CD4-positive, alpha-beta T cell (primary cell): ENCODE measurements at regions of chr15 and their contacts with region 1.

Region 1: GRCh38 chr15:40893733-40894688 is at the start of gene VPS18:
- DNase-seq: peak; percentile 97 to 100 (median 99)
- ATAC-seq: peak; percentile 96
- H3K4me3 ChIP-seq: peak within 1 kb of the TSS; percentile 79
- H3K4me3 Mint-ChIP-seq: peak within 1 kb of the TSS; percentile 100
- H3K27ac ChIP-seq: peak within 1 kb of the TSS; percentile 57 to 81
- H3K27ac Mint-ChIP-seq: peak within 1 kb of the TSS; percentile 93
- H3K4me1 ChIP-seq: peaks cover 39% of the 10 kb centered on the region
- H3K4me1 Mint-ChIP-seq: peaks cover 39% of the 10 kb centered on the region
- H3K27me3 ChIP-seq: no peaks in the 10 kb centered on the region
- H3K27me3 Mint-ChIP-seq: no peaks in the 10 kb centered on the region
- CTCF ChIP-seq: peak; percentile 95
- total RNA-seq, gene VPS18: 20.8 to 21.7 TPM

Region 2: DNA sequence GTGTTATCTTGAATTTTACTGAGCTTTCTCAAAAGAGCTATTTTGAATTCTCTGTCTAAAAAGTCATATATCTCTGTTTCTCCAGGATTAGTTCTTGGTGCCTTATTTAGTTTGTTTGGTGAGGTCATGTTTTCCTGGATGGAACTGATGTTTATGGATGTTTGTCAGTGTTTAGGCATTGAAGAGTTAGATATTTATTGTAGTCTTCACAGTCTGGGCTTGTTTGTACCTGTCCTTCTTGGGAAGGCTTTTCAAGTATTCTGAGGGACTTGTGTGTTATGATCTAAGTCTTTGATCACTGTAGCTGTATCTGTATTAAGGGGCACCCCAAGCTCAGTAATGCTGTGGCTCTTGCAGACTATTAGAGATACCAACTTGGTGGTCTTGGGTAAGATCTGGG is 209.6 kb before region 1 on chr15:
- CTCF ChIA-PET with region 1: interaction called, 5 read pairs
- POLR2A ChIA-PET with region 1: no interaction called
- intact Hi-C with region 1: loop called (anchors 2 to 5 kb)
- DNase-seq: no peak
- ATAC-seq: no peak
- H3K4me3 ChIP-seq: no peak overlapping the region
- H3K4me3 Mint-ChIP-seq: no peak overlapping the region
- H3K27ac ChIP-seq: no peak overlapping the region
- H3K27ac Mint-ChIP-seq: no peak overlapping the region
- H3K4me1 ChIP-seq: peaks cover under 1% of the 10 kb centered on the region
- H3K4me1 Mint-ChIP-seq: no peaks in the 10 kb centered on the region
- H3K27me3 ChIP-seq: no peaks in the 10 kb centered on the region
- H3K27me3 Mint-ChIP-seq: no peaks in the 10 kb centered on the region
- CTCF ChIP-seq: no peak

Region 3: GRCh38 chr15:40782580-40783227 is 111.3 kb before region 1 on chr15:
- CTCF ChIA-PET with region 1: interaction called, 10 read pairs
- POLR2A ChIA-PET with region 1: no interaction called
- intact Hi-C with region 1: no loop called
- DNase-seq: peak; percentile 70 to 88 (median 78)
- ATAC-seq: peak; percentile 94
- H3K4me3 ChIP-seq: no peak overlapping the region
- H3K4me3 Mint-ChIP-seq: no peak overlapping the region
- H3K27ac ChIP-seq: no peak overlapping the region
- H3K27ac Mint-ChIP-seq: peak overlapping the region; percentile 1
- H3K4me1 ChIP-seq: peaks cover 9% of the 10 kb centered on the region
- H3K4me1 Mint-ChIP-seq: peaks cover 32% of the 10 kb centered on the region
- H3K27me3 ChIP-seq: no peaks in the 10 kb centered on the region
- H3K27me3 Mint-ChIP-seq: no peaks in the 10 kb centered on the region
- CTCF ChIP-seq: peak; percentile 82

Region 4: GRCh38 chr15:40873625-40874561 is 20.1 kb before region 1 on chr15 and contains the start of gene RHOV:
- CTCF ChIA-PET with region 1: interaction called, 11 read pairs
- POLR2A ChIA-PET with region 1: interaction called, 6 read pairs
- intact Hi-C with region 1: no loop called
- DNase-seq: peak in 13 of 14 experiments; percentile 19 to 73 (median 44)
- ATAC-seq: peak; percentile 87
- H3K4me3 ChIP-seq: peak within 1 kb of the TSS; percentile 53
- H3K4me3 Mint-ChIP-seq: peak within 1 kb of the TSS; percentile 81
- H3K27ac ChIP-seq: no peak within 1 kb of the TSS
- H3K27ac Mint-ChIP-seq: no peak within 1 kb of the TSS
- H3K4me1 ChIP-seq: peaks cover 14% of the 10 kb centered on the region
- H3K4me1 Mint-ChIP-seq: peaks cover 5% of the 10 kb centered on the region
- H3K27me3 ChIP-seq: no peaks in the 10 kb centered on the region
- H3K27me3 Mint-ChIP-seq: no peaks in the 10 kb centered on the region
- CTCF ChIP-seq: no peak
- total RNA-seq, gene RHOV: 0.36 TPM

Region 5: DNA sequence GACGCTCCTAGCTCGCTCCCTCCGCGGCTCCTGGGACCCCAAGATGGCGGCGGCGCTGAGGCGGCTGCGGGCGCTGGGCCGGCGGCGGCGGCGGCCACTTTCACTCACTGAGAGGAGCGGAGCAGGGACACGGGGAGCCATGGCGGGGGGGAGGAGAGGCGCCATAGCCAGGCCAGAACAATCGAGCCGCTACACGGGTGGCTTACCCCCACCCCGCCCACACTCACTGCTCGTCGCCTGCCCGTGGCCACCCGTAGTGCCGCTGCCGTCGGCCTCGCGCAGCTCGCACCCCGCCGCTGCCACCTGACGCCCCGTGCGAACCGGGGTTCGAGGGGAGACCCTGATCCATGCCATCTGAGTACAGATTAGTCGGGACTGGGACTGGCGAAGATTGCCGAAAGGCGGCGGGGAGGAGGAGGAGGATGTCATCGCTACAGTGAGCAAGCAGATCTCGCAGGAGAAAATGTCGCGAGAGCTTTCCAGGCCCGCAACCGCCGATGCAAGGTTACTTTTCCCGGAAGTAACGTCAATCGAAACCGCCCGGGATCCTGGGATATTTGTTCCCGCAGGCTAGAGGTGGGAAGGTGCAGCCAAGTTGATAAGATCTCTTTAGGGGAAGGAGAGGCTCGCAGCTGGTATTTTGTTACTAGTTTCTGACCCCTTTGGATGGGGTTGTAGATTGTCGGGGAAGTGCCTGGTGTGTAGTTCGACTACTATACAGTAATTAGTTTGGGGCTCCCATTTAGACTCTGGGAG is 222.3 kb after region 1 on chr15 and contains the start of gene INO80:
- CTCF ChIA-PET with region 1: interaction called, 7 read pairs
- POLR2A ChIA-PET with region 1: interaction called, 6 read pairs
- intact Hi-C with region 1: loop called in 1 of 2 experiments (anchors 2 kb)
- DNase-seq: peak; percentile 90 to 98 (median 95)
- ATAC-seq: peak; percentile 79
- H3K4me3 ChIP-seq: peak within 1 kb of the TSS; percentile 99
- H3K4me3 Mint-ChIP-seq: peak within 1 kb of the TSS; percentile 93
- H3K27ac ChIP-seq: peak within 1 kb of the TSS; percentile 79 to 91
- H3K27ac Mint-ChIP-seq: peak within 1 kb of the TSS; percentile 98
- H3K4me1 ChIP-seq: peaks cover 20% of the 10 kb centered on the region
- H3K4me1 Mint-ChIP-seq: peaks cover 25% of the 10 kb centered on the region
- H3K27me3 ChIP-seq: no peaks in the 10 kb centered on the region
- H3K27me3 Mint-ChIP-seq: no peaks in the 10 kb centered on the region
- CTCF ChIP-seq: no peak
- total RNA-seq, gene INO80: 20.3 to 22.9 TPM